PC-9 (cell line): ENCODE measurements at regions of chr17 and their contacts with region 1.

Region 1: GRCh38 chr17:48878918-48879898 is 13.4 kb upstream of the ATP5MC1 start:
- DNase-seq: peak; percentile 49 to 52
- H3K4me3 ChIP-seq: no peak overlapping the region
- H3K27ac ChIP-seq: no peak overlapping the region
- H3K4me1 ChIP-seq: no peaks in the 10 kb centered on the region
- H3K27me3 ChIP-seq: 0 out of 2 replicates have a peak, but pooled peaks cover 4% of the 10 kb centered on the region
- CTCF ChIP-seq: peak; percentile 99

Region 2: DNA sequence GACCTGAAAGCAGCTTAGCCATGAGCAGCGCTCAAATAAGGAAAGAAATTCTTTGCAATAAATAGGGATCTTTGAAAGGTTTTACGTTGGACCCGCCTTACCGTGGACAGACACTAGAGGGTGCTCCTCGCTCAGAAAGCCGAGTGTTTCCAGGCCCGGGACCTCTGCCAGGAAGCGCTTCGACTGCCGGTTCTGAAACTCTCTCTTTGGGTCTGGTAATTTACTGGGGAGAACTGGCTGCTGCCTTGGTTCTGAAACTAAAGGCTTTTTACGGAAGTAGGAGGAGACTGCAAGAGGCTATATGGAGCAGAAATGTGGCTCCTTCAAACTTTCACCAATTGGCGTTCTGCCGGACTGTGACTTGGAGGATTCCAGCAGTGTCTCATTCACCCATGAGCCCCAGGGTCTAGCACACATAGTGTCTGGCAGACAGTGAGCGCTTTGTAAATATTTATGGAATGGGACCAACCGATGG is 207.5 kb before region 1 on chr17:
- CTCF ChIA-PET with region 1: interaction called, 3 read pairs
- POLR2A ChIA-PET with region 1: no interaction called
- intact Hi-C with region 1: loop called (anchors 1 kb)
- DNase-seq: peak; percentile 39 to 66
- H3K4me3 ChIP-seq: peak overlapping the region; percentile 37; the same call in 1 of the 2 replicates
- H3K27ac ChIP-seq: no peak overlapping the region
- H3K4me1 ChIP-seq: no peaks in the 10 kb centered on the region
- H3K27me3 ChIP-seq: peaks cover 8% of the 10 kb centered on the region
- CTCF ChIP-seq: peak; percentile 97

Region 3: GRCh38 chr17:48690655-48691054 is 188.6 kb before region 1 on chr17:
- CTCF ChIA-PET with region 1: interaction called, 17 read pairs
- POLR2A ChIA-PET with region 1: no interaction called
- intact Hi-C with region 1: no loop called
- DNase-seq: no peak
- H3K4me3 ChIP-seq: no peak overlapping the region
- H3K27ac ChIP-seq: no peak overlapping the region
- H3K4me1 ChIP-seq: no peaks in the 10 kb centered on the region
- H3K27me3 ChIP-seq: peaks cover 13% of the 10 kb centered on the region; the same call in 1 of the 2 replicates
- CTCF ChIP-seq: no peak

Region 4: GRCh38 chr17:48804925-48805411 is 74.2 kb before region 1 on chr17:
- CTCF ChIA-PET with region 1: interaction called, 13 read pairs
- POLR2A ChIA-PET with region 1: no interaction called
- intact Hi-C with region 1: loop called (anchors 1 kb)
- DNase-seq: peak in 1 of 2 experiments; percentile 57
- H3K4me3 ChIP-seq: no peak overlapping the region
- H3K27ac ChIP-seq: no peak overlapping the region
- H3K4me1 ChIP-seq: no peaks in the 10 kb centered on the region
- H3K27me3 ChIP-seq: peaks cover 16% of the 10 kb centered on the region
- CTCF ChIP-seq: peak; percentile 99

Region 5: GRCh38 chr17:48841395-48841831 is 37.8 kb before region 1 on chr17:
- CTCF ChIA-PET with region 1: interaction called, 10 read pairs
- POLR2A ChIA-PET with region 1: no interaction called
- intact Hi-C with region 1: no loop called
- DNase-seq: no peak
- H3K4me3 ChIP-seq: no peak overlapping the region
- H3K27ac ChIP-seq: no peak overlapping the region
- H3K4me1 ChIP-seq: peaks cover 1% of the 10 kb centered on the region
- H3K27me3 ChIP-seq: no peaks in the 10 kb centered on the region
- CTCF ChIP-seq: no peak